OCI-LY7 (cell line): ENCODE measurements at regions of chr14 and their contacts with region 1.

Region 1: DNA sequence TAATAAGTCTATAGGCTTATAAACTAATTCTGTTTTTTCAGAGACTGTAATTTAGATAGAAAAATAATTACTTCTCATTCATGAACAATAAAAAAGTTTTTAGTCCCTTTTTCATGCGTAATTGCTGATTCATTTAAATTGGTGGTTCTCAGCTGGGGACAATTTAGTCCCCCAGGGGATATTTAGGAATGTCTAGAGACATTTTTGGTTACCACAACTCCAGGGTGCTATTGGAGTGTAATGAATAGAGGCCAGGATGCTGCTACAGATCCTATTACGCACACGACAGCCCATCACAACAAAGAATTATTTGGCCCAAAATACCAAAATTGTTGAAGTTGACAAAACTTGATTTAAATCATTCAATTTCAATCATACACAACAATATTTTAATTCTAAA is 22.8 kb upstream of the VCPKMT start:
- DNase-seq: no peak
- H3K4me3 ChIP-seq: no peak overlapping the region
- H3K27ac ChIP-seq: no peak overlapping the region
- H3K4me1 ChIP-seq: no peaks in the 10 kb centered on the region
- CTCF ChIP-seq: no peak

Region 2: DNA sequence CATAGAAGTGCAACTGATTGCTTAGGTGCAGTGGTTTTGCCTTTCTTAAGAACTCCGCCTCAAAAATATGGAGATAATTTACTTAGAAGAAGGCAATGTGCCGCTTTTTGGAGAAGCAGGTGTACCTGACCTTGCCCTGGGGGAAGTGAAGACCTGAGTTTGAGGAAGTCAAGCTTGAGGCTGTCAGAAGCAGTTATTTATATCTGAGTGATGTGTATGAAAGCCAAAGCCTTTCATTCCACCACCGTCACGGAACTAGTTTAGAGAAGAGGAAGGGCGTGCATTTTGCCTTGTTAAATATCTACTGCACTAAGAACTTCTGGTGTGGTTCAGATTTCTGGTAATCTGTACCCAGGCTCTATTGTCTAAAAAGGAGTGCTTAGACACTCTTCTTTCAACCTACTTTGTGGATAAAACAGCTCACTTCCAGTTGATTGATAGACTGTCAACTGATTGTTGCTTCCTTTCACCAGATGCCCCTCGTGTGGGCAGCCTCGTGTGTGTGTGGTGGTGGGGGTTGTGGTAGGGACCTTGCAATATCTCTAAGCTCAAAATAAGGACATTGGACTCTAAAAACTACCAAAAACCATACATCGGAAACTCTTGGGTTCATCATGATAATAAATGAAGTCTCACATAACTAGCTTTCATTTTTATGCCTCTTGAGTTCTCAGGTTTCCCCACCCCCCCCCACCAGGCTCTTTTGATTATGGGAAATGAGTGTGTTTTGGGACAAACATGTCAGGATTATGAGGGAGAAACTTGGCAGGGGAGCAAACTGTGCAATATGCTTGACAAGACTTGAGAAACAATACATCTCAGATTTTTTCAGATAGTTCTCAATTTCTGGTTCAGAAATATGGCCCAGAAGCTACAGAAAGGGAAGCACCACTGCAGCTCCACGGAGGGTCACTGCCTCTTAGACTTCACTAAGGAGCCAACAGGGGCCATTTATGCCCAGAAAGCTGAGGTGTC is 167.7 kb before region 1 on chr14:
- CTCF ChIA-PET with region 1: no interaction called
- POLR2A ChIA-PET with region 1: no interaction called
- intact Hi-C with region 1: no loop called
- DNase-seq: peak; percentile 97
- H3K4me3 ChIP-seq: peak overlapping the region; percentile 65
- H3K27ac ChIP-seq: peak overlapping the region; percentile 99
- H3K4me1 ChIP-seq: peaks cover 81% of the 10 kb centered on the region
- CTCF ChIP-seq: no peak

Region 3: DNA sequence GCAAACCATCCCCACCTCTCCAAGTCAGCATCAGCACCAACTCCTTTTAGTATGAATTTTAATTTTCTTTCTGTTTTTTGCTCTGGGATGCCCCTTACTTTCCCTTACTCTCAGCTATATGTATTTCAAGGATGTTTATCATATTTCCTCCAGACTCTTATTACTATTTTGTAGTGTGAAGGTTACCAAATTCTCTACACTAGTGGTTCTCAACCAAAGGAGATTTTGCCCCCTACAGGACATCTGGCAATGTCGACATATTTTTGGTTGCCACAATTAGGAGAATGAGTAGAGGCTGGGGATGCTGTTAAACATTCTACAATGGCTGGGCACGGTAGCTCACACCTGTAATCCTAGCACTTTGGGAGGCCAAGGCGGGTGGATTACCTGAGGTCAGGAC is 121.3 kb after region 1 on chr14:
- CTCF ChIA-PET with region 1: no interaction called
- POLR2A ChIA-PET with region 1: no interaction called
- intact Hi-C with region 1: loop called (anchors 5 kb)
- DNase-seq: peak; percentile 58
- H3K4me3 ChIP-seq: no peak overlapping the region
- H3K27ac ChIP-seq: no peak overlapping the region
- H3K4me1 ChIP-seq: no peaks in the 10 kb centered on the region
- CTCF ChIP-seq: peak; percentile 77